Activated B cell treated with CpG ODN at 0.5 μM for 24 hours (primary cell): ENCODE measurements at regions of chr1 and their contacts with region 1.

Region 1: GRCh38 chr1:67430352-67431155 is at the start of gene SERBP1:
- DNase-seq: peak; percentile 91
- ATAC-seq: peak; percentile 86
- H3K4me3 Mint-ChIP-seq: peak within 1 kb of the TSS; percentile 98
- H3K27ac Mint-ChIP-seq: peak within 1 kb of the TSS; percentile 99
- H3K4me1 Mint-ChIP-seq: peaks cover 59% of the 10 kb centered on the region
- H3K27me3 Mint-ChIP-seq: no peaks in the 10 kb centered on the region
- CTCF ChIP-seq: no peak
- total RNA-seq, gene SERBP1: 222 and 232 TPM in 2 replicates

Region 2: DNA sequence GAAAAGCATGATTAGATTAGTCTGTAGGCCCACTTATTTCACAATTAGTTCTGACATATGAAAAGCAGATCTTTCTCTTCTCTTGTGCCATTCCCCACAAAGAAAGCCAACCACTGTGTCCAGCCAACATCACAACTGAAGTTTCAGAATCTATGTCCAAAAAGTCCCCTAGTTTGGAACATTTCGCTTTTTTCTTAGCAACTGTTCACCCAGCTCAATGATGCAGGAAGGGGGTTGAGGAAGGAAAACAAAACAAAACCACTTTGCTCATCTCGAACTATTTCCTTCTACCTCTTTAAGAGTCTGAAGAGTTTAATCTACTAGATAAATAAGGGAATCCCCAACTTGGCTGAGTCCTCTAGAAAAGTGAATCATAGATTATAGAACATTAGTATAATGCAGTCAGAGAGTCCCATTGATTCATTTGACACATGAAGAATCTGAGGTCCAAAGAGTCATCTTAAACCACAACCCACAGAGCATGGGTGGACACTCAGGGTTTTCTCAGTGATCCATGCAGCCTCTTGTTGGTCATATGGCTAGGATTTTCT is 1055.9 kb before region 1 on chr1:
- CTCF ChIA-PET with region 1: no interaction called
- POLR2A ChIA-PET with region 1: no interaction called
- intact Hi-C with region 1: loop called (anchors 10 kb)
- DNase-seq: no peak
- ATAC-seq: peak; percentile 79
- H3K4me3 Mint-ChIP-seq: peak overlapping the region; percentile 39
- H3K27ac Mint-ChIP-seq: peak overlapping the region; percentile 93
- H3K4me1 Mint-ChIP-seq: peaks cover 94% of the 10 kb centered on the region
- H3K27me3 Mint-ChIP-seq: no peaks in the 10 kb centered on the region
- CTCF ChIP-seq: no peak

Region 3: GRCh38 chr1:66981679-66982078 is 448.9 kb before region 1 on chr1:
- CTCF ChIA-PET with region 1: no interaction called
- POLR2A ChIA-PET with region 1: interaction called, 3 read pairs
- intact Hi-C with region 1: loop called (anchors 5 kb)
- DNase-seq: no peak
- ATAC-seq: peak; percentile 52
- H3K4me3 Mint-ChIP-seq: no peak overlapping the region
- H3K27ac Mint-ChIP-seq: peak overlapping the region; percentile 42
- H3K4me1 Mint-ChIP-seq: peaks cover 19% of the 10 kb centered on the region
- H3K27me3 Mint-ChIP-seq: no peaks in the 10 kb centered on the region
- CTCF ChIP-seq: no peak

Region 4: DNA sequence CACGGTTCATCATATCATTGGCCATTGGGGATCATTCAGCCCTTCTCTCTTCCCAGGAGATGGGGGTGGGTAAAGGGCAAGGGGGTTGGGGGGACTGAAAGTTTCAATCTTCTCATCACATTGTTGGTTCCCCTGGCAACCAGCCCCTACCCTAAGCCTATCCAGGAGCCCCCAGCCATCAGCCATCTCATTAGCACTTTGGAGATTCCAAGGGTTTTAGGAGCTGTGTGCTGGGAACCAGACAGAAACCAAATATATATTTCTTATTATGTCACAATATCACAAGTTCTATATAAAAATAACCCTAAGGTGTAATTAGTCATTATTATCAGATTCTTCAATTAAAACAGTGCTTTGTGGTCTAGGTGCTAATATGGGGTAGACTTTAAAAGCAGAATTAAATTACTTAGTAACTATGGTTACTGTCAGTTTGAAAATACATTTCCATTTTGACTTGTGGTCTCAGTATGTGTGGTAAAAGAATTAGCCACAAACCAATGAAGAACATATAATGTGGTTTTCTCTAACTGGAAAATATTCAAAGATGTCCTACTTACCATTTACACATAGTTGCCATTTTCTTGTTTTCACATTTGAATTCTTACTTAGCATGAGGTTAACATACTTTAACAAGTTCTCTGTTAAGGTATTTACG is 236.2 kb before region 1 on chr1:
- CTCF ChIA-PET with region 1: no interaction called
- POLR2A ChIA-PET with region 1: no interaction called
- intact Hi-C with region 1: no loop called
- DNase-seq: no peak
- ATAC-seq: no peak
- H3K4me3 Mint-ChIP-seq: no peak overlapping the region
- H3K27ac Mint-ChIP-seq: no peak overlapping the region
- H3K4me1 Mint-ChIP-seq: no peaks in the 10 kb centered on the region
- H3K27me3 Mint-ChIP-seq: peaks cover 3% of the 10 kb centered on the region
- CTCF ChIP-seq: no peak

Region 5: DNA sequence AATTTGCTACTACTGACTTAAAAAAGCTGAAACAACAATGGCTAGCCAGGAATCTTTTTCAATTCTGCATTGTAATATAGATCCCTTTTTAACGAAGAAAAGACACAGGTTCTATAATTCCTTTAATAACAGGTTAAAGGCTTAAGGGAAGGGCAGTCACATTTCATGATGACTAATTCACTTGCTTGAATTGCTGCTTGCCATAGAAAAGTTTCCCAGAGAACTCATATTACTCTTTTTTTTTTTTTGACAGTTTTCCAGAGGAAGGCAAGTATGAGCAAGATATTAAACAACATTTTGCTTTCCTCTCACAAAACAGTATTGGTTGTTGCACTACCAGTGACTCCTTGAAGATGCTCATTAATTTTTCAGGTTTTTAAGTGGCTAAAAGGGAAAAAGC is 203.4 kb before region 1 on chr1:
- CTCF ChIA-PET with region 1: no interaction called
- POLR2A ChIA-PET with region 1: no interaction called
- intact Hi-C with region 1: loop called (anchors 5 kb)
- DNase-seq: no peak
- ATAC-seq: no peak
- H3K4me3 Mint-ChIP-seq: no peak overlapping the region
- H3K27ac Mint-ChIP-seq: no peak overlapping the region
- H3K4me1 Mint-ChIP-seq: no peaks in the 10 kb centered on the region
- H3K27me3 Mint-ChIP-seq: peaks cover 4% of the 10 kb centered on the region
- CTCF ChIP-seq: no peak

Region 6: DNA sequence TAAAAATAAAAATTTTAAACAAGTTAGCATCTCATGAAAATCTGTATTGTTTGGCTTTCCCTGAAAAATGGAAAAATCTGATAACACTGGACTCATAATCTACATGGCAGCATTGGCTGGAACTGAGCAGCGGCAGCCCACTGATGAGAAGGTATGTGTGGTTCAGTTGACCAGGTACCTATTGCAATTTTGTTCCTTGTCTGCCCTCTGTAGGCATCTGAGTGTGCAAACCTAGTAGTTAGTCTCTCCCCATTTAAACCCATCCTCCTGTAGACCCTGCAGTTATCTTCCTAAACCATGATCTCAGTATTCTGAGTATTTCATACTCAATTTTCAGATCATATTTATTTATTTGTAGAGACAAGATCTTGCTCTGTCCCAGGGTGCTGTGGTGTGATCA is 59.1 kb after region 1 on chr1:
- CTCF ChIA-PET with region 1: no interaction called
- POLR2A ChIA-PET with region 1: interaction called, 3 read pairs
- intact Hi-C with region 1: loop called (anchors 1 kb)
- DNase-seq: no peak
- ATAC-seq: peak; percentile 42
- H3K4me3 Mint-ChIP-seq: no peak overlapping the region
- H3K27ac Mint-ChIP-seq: no peak overlapping the region
- H3K4me1 Mint-ChIP-seq: no peaks in the 10 kb centered on the region
- H3K27me3 Mint-ChIP-seq: peaks cover 5% of the 10 kb centered on the region
- CTCF ChIP-seq: no peak

Region 7: DNA sequence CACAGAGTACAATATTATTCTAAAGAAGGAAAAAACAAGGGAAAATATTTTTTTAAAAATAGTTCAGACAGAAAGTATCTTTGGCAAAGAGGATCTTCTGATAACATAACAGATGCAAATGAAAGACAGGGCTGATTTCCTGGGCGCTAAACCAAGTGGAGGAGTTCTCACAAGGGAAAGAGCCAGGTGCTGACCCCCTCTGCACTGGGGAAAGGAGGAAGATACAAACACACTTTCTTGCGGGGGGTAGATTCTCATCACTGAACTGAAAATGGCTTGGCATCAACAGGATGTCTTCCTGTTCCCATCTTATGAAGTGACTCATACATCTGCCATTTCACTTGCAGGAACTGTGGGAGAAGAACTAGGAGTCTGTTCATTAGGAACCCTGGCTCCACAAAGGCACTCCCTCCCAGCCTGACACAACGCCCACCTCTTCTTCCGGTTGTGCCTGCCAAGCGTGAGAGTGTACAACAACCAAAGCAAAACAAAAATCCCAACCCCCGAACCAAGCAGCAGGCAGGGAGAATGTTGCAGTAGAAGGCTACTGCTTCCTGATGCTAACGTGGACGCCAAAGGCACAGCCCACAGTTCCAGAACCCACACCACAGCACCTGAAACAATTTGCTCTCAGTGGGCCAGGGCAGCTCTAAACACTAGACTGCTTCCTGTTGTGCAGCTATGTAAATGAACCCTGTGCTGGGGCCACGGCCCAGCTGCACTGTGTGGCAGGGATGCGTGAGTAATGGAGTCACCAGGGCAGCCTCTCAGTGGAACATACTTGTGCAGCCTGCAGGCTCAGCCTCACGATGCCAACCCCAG is 305.5 kb after region 1 on chr1:
- CTCF ChIA-PET with region 1: no interaction called
- POLR2A ChIA-PET with region 1: no interaction called
- intact Hi-C with region 1: loop called (anchors 1 kb)
- DNase-seq: peak; percentile 24
- ATAC-seq: peak; percentile 98
- H3K4me3 Mint-ChIP-seq: peak overlapping the region; percentile 79
- H3K27ac Mint-ChIP-seq: peak overlapping the region; percentile 89
- H3K4me1 Mint-ChIP-seq: peaks cover 44% of the 10 kb centered on the region
- H3K27me3 Mint-ChIP-seq: no peaks in the 10 kb centered on the region
- CTCF ChIP-seq: no peak

Region 8: GRCh38 chr1:67853704-67854103 is 423.1 kb after region 1 on chr1:
- CTCF ChIA-PET with region 1: no interaction called
- POLR2A ChIA-PET with region 1: no interaction called
- intact Hi-C with region 1: no loop called
- DNase-seq: no peak
- ATAC-seq: no peak
- H3K4me3 Mint-ChIP-seq: no peak overlapping the region
- H3K27ac Mint-ChIP-seq: no peak overlapping the region
- H3K4me1 Mint-ChIP-seq: no peaks in the 10 kb centered on the region
- H3K27me3 Mint-ChIP-seq: peaks cover 16% of the 10 kb centered on the region
- CTCF ChIP-seq: no peak